ENCODE measurements at regions of chr14 and their contacts with region 1.

Region 1: DNA sequence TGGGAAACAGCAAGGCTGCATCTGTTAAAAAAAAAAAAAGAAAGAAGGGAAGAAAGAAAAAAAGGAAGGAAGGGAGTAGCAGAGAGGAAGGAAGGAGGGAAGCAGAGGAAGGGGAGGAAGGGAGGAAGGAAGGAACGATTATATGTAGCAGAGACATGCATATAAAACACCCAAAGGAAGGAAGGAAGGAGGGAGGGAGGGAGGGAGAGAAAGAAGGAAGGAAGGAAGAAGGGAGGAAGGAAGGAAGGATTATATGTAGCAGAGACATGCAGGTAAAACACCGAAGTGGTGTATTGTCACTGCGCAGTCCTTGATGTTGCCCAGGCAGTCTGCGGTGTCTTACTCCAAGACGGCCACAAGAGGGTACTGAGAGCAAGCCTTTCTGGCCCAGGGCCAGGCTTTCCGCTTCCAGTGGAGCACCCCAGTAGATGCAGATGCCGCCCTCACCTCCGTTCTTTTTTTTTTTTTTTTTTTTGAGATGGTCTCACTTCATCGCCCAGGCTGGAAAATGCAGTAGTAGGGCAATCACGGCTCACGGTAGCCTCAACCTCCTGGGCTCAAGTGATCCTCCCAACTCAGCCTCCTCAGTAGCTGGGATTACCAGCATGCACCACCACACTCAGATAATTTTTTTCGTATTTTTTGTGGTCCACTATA is 5.8 kb upstream of the LBHD2 start:
- DNase-seq: peak; percentile 89
- ATAC-seq: peak; percentile 85
- H3K4me3 Mint-ChIP-seq: no peak overlapping the region
- H3K27ac Mint-ChIP-seq: no peak overlapping the region
- H3K4me1 Mint-ChIP-seq: no peaks in the 10 kb centered on the region
- H3K27me3 Mint-ChIP-seq: peaks cover 4% of the 10 kb centered on the region

Region 2: DNA sequence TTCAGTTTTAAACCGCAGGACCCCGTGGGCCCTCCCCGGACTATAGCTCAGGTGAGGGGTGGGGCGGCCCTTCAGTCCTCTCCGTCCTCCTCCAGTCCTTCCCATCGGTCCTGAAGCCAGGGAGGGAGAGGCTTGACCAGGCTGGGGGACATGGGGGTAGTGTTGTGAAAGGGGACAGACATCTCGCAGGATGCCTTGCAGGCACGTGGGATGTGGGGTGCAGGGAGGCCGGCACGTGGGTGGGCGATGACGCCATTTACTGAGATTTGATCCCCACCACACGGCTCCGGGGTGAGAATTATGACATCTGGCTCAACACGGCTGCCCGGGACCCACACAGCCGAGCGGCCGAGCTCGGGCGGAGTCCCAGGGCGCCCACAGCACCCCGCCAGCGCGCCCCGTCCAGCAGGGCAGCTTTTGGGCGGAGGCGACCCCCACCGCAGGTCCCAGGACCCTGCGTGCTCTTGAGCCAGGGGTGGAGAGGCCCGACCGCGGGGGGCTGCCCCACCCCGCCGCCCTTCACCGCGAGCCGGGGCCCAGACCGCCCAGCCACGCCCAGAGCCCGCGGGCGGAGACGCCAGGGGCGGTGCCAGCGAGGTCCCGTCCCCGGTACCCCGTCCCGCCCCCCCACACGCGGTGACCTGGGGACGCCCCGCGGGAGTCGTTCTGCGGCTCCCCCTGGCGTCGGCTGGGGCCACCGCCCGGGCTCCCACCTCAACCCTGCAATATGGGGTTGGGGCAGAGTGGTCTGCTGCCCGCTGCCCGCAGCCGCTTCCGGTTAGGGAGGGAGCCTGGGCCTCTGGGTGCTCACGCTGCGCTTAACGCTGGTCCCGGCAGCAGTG is 13.0 kb after region 1 on chr14:
- CTCF ChIA-PET with region 1: interaction called, 5 read pairs
- POLR2A ChIA-PET with region 1: no interaction called
- intact Hi-C with region 1: loop called (anchors 1 kb)
- DNase-seq: peak; percentile 88
- ATAC-seq: peak; percentile 91
- H3K4me3 Mint-ChIP-seq: peak overlapping the region; percentile 12
- H3K27ac Mint-ChIP-seq: no peak overlapping the region
- H3K4me1 Mint-ChIP-seq: peaks cover 3% of the 10 kb centered on the region
- H3K27me3 Mint-ChIP-seq: no peaks in the 10 kb centered on the region

Region 3: DNA sequence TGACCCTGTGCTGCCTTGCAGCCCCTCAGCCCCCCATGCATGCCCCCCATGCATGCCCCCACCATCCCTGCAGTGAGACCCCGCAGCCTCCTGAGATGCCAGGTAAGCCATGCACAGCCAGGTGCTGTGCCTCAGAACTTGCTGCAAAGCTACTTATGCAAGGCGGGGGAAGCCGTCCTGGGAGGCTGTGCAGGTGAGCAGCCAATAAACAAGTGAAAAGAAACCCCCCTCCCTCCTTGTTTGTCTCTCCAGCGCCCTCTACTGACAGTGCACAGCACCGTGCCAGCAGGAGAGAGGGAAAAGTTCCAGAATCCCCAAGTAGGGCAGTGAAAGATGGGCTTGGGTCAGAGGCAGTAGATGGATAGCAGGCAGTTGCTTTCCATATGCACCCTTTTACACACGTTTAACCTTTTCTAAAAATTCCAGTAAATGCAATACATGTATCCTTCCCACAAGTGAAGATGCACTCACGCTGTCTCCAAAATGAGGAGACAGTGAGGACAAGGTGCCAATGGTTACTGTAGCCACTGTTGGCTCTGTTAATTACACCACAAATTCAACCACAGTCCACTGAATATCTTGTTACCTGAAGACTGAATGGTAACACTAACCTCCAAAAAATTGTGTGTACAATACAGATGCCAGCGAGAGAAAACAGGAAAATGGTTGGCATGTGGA is 63.0 kb after region 1 on chr14:
- CTCF ChIA-PET with region 1: no interaction called
- POLR2A ChIA-PET with region 1: no interaction called
- intact Hi-C with region 1: loop called in 1 of 2 experiments (anchors 2 kb)
- DNase-seq: peak; percentile 72
- ATAC-seq: peak; percentile 51
- H3K4me3 Mint-ChIP-seq: no peak overlapping the region
- H3K27ac Mint-ChIP-seq: no peak overlapping the region
- H3K4me1 Mint-ChIP-seq: no peaks in the 10 kb centered on the region
- H3K27me3 Mint-ChIP-seq: peaks cover 35% of the 10 kb centered on the region

Region 4: GRCh38 chr14:103292426-103293374 is 214.5 kb after region 1 on chr14:
- CTCF ChIA-PET with region 1: interaction called, 5 read pairs
- POLR2A ChIA-PET with region 1: no interaction called
- intact Hi-C with region 1: loop called (anchors 1 kb)
- DNase-seq: peak; percentile 89
- ATAC-seq: peak; percentile 97
- H3K4me3 Mint-ChIP-seq: no peak overlapping the region
- H3K27ac Mint-ChIP-seq: no peak overlapping the region
- H3K4me1 Mint-ChIP-seq: no peaks in the 10 kb centered on the region
- H3K27me3 Mint-ChIP-seq: peaks cover 9% of the 10 kb centered on the region

Region 5: DNA sequence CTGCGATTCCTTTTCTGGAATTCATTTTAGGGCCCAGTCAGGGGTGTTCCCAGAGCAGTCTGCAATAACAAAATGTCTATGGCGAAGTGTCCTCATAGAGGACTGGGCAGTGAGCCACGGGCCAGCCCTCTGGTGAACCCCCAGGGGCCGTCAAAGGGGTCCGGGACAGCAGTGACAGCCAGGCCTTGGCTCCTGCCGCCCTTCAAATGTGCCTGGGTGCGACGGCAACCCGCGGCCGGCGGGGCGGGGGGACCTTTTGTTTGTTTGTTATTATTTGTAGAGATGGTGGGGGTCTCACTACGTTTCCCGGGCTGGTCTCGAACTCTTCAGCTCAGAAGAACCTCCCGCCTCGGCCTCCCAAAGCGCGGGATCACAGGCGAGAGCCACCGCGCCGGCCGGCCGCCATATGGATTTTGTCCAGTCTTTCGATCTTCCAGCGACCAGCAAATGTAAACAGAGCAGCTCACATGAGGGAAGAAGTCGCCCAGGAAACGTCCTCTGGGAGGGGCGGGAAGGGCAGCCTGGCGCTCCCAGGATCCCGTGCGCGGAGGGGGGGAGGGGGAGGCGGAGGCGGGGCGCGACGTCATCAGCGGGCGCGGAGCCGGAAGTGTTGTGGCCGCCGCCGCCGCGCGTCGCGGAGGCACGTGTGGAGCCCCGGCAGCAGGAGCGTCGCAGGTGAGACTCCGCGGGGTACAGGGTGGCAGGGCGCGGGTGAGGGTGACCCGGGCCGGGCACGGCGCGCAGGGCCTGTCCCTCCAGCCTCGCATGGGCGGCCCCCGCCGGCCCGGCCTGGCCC is 450.6 kb after region 1 on chr14 and contains the start of gene TRMT61A:
- CTCF ChIA-PET with region 1: no interaction called
- POLR2A ChIA-PET with region 1: no interaction called
- intact Hi-C with region 1: loop called in 1 of 2 experiments (anchors 10 kb)
- DNase-seq: peak; percentile 87
- ATAC-seq: peak; percentile 77
- H3K4me3 Mint-ChIP-seq: peak within 1 kb of the TSS; percentile 96
- H3K27ac Mint-ChIP-seq: peak within 1 kb of the TSS; percentile 94
- H3K4me1 Mint-ChIP-seq: peaks cover 33% of the 10 kb centered on the region
- H3K27me3 Mint-ChIP-seq: peaks cover 2% of the 10 kb centered on the region
- total RNA-seq, gene TRMT61A: 8.8 to 9.0 TPM